BJ (cell line): ENCODE measurements at regions of chr6 and their contacts with region 1.

Region 1: DNA sequence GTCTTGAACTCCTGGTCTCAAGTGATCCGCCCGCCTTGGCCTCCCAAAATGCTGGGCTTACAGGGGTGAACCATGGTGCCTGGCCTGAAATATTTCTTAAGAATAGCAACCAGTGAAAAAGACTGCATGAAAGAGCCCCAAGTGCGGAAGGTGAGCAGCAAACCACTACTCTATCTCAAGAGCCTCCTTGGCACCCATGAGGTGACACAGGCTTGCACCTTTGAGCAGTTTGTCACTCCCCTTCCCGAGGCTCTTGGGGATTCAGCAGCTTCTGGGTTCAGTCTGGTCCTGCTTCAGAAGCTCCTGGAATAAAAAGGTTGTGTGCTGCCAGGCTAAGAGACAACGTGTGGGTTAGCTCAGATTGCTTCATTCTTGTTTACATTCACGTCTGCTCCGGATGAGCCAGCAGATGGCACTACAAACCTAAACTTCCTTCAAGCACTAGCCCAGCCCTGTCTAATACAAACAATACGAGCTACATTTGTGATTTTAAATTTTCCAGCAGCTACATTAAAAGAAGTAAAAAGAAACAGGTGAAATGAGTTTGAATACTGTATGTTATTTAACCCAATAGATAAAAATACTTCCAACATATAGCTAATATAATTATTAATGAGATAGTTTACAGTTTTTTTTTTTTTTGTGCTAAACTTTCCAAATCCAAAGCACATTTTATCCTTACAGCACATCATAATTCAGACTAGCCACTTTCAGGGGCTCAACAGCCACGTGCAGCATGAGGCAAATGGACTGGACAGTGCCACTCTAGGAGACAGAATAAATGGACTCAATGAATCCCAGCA is 46.2 kb downstream of the GJA10 start:
- DNase-seq: no peak
- H3K4me3 ChIP-seq: no peak overlapping the region
- H3K27me3 ChIP-seq: peaks cover 2% of the 10 kb centered on the region; the same call in 1 of the 2 replicates
- CTCF ChIP-seq: peak; percentile 82

Region 2: DNA sequence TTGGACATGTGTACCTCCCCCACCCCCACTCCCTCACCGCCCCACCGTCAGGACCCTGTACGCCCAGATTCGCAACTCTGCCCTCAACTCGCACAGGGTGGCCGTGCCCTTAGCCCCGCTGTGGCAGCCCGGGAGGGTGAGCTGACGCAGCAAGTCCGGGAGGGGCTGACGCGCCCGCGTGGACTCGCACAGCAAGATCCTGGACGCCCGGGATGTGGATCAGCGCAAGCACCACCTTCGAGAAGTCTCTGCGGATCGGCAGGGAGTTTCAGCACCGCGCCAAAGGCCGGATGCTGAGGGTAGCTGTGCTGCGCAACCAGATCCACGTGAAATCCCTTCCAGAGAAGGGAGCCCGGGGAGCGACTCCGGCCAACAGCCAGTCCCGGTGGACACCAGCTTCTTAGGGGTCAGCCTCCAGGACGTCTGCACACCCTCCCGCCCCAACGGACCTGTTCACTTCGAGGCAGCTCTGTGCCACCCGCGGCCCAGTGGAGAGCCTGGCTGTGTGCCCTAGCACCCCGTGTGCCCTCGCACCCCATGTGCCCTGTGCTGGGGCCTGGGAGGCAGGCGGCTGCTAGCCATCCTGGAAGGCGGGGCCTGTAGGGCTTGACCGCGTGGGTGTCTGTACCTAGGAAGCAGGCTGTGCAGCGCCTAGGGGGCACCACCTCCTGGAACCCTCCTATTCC is 52.8 kb before region 1 on chr6:
- CTCF ChIA-PET with region 1: no interaction called
- POLR2A ChIA-PET with region 1: no interaction called
- DNase-seq: no peak
- H3K4me3 ChIP-seq: no peak overlapping the region
- H3K27me3 ChIP-seq: peaks cover 3% of the 10 kb centered on the region; the same call in 1 of the 2 replicates
- CTCF ChIP-seq: no peak

Region 3: DNA sequence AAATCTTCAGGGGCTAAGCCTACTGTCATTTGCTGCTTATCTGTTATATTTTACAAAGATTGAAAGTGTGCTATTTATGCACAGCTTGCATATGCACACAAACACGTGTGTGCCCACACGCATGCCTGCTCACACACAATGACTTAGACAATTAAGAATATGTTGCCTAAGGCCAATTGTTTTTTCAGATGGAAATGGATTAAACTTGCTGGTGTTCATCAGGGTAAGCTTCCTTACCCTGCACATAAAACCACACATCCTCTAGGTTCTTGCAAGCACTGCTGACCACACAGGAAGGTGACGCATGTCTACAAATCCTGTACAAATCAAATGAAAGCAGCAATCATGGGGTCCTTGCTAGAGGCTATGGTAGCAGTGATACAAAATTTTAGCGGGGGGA is 12.3 kb after region 1 on chr6:
- CTCF ChIA-PET with region 1: interaction called, 17 read pairs
- POLR2A ChIA-PET with region 1: no interaction called
- DNase-seq: peak; percentile 65
- H3K4me3 ChIP-seq: no peak overlapping the region
- H3K27me3 ChIP-seq: no peaks in the 10 kb centered on the region
- CTCF ChIP-seq: no peak